GM18951 (cell line): ENCODE measurements at regions of chr13 and their contacts with region 1.

Region 1: DNA sequence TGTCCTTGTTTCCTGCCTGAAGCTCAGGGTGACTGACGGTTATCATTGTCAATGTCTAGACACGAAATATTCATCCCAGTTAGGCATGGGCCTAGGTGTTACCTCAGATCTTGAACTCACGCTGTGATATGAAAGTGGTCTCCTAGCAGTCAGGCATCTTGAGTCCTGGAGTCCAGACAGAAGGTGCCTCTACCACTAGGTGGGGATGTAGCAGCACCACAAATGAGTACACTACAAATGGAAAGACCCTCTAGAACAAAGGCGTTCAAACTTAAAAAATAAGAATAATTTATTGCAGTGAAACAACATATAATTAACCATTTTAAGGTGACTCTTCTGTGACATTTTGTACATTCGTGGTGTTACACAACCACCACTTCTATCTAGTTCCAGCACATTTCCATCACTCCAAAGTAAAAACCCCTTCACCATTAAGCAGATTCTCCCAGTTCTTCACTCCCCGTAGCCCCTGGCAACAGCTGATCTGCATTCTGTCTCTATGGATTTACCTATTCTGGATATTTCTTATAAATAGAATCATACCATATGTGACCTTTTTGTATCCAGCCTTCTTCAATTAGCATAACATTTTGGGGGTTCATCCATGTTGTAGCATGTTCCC is 11.9 kb upstream of the FRY start:
- POLR2A ChIP-seq: no peak

Region 2: GRCh38 chr13:32297206-32297605 is 277.5 kb after region 1 on chr13:
- in situ Hi-C with region 1: loop called (anchors 10 kb)
- POLR2A ChIP-seq: no peak